Cardiac septum (tissue), 1 donor: ENCODE measurements at regions of chr3 and their contacts with region 1.

Region 1: GRCh38 chr3:52056968-52057805 is 816 bp upstream of the DUSP7 start:
- DNase-seq: peak; percentile 100

Region 2: DNA sequence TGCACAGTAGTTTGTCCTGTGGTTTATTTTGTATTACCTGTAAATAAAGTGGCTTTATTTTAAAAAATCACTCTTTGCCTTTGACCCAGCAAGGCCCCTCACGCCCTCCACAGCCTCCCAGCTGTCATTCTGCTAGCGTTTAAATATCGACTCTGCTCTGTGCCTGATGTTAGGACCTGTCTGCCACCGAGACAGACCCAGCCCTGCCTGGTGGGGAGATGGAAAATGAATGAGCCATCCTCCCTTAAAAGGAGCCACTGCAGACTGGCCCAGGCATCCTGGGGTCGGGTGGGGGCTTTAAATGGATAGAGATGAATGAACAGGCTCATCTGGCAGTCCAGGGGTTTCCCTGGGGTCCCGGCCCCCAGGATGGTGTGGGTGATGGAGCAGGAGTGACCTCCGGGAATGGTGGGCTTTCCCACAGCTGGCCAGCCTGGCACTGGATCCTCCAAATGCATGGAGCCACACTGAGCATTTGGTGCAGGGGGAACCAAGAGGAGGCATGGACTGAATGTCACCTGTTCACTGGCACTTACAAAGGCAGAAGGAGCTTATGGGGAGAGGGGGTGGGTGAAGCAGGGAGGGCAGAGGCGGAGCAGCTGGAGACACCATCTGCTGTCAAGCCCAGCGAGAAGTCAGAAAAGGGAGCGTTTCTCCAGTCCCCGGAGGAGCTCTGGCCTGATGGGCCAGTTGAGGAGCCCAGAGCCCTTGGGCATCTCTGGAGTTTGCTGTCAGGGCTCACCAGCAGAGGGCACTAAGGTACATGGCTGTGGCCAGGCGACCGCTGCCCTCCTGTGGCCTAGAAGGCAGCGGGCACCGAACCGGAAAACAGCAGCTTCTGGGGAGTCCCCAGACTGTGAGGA is 338.4 kb before region 1 on chr3:
- intact Hi-C with region 1: no loop called
- DNase-seq: no peak

Region 3: GRCh38 chr3:51941798-51942602 is 115.2 kb before region 1 on chr3 and contains the starts of genes PARP3 and RRP9:
- intact Hi-C with region 1: loop called (anchors 5 kb)
- DNase-seq: peak; percentile 99
- total RNA-seq, gene PARP3: 15.2 TPM
- total RNA-seq, gene RRP9: 9.7 TPM

Region 4: DNA sequence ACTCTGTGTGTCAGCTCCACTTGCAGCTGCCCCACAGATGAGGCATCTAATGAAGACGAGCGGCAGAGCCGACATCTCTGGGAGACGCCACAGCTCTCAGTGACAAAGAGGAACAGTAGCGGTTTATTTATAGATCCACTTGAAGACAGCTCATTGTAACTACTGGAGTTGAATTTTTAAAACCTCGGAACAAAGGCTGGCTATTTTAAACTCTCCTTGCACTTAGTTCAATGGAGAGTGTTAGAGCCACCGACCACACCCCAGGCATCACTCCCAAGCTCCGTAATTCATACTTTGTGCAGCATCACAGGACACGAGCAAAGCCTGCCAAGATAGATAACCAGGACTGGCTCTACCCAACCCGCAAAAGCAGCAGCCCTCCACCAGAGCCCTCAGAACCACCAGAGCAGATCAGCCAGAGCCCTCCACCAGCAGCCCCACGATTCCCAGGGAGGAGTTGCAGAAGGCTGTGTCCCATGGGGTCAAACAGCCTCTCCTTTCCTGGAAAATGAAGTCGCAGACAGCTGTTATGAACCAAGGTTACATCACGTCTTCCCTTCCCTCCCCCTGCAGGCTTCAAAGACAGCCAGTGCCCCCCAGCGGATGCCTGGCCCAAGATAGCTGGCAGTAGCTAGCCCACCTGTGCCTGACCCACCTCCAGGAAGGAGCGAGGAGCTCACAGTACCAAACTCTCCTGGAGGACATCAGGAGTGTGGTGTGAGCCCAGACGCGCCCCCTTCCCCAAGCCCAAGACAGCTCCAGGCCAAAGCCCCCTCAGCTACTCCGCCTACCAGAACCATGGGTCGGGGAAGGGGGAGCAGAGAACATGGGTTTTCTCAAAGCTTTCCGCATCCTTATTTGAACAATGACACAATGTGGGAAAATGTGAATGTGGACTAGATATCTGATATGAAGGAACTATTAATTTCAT is 51.4 kb after region 1 on chr3:
- intact Hi-C with region 1: loop called (anchors 1 kb)
- DNase-seq: peak; percentile 85

Region 5: DNA sequence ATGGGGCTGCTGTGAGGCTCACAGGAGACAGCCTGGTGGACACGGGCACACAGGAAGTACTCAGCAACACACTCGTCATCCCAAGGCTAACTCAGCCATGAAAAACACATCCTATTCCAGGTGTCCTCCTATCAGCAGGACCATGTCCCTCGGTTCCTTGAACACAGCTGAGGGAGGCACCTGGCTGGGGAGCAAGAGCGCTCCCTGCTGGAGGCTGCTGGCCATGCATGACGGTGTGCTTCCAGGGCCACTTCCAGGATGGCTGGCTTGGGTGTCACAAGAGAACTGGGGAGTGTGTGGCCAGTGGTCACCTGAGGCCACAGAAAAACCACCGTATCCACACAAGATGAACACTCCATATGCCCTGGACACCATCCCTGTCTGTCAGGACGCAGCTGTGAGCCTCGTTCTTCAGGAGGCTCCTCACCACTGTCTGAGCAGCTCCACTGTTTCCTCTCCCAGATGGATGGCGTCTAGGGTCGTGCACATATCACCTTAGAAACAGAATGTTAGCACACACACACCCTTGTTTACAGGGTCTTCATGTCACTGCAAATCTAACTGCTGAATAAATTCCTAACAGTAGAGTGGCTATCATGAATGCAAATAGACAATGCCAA is 66.0 kb after region 1 on chr3:
- intact Hi-C with region 1: loop called (anchors 1 kb)
- DNase-seq: peak; percentile 90

Region 6: GRCh38 chr3:52144034-52144795 is 87.0 kb after region 1 on chr3:
- intact Hi-C with region 1: loop called (anchors 1 kb)
- DNase-seq: peak; percentile 89